Activated CD4-positive, alpha-beta T cell treated with anti-CD3 and anti-CD28 coated beads for 36 hours (primary cell): ENCODE measurements at regions of chr12 and their contacts with region 1.

Region 1: DNA sequence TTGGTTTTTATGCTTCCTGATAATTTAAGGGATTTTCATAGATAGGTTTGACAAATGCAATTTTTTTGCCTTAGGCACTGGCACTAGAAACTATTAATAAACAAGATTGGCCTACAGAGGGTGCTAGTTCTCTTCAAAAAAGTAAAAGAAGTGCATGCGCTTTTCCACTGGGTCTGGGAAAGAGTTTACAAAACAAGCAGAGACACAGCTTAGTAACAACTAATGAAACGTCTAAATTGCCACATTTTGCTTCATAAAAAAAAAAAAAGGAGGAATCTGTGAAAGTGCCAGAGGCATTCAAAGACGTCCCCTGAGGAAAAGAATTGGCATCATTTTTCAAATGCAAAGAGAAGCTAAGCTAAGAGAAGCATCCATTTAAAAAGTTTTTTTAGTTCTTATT is 58.3 kb upstream of the EEA1 start:
- DNase-seq: no peak
- ATAC-seq: no peak
- H3K4me3 Mint-ChIP-seq: peak overlapping the region; percentile 22
- H3K27ac Mint-ChIP-seq: peak overlapping the region; percentile 88
- H3K4me1 Mint-ChIP-seq: peaks cover 37% of the 10 kb centered on the region
- H3K27me3 Mint-ChIP-seq: no peaks in the 10 kb centered on the region

Region 2: DNA sequence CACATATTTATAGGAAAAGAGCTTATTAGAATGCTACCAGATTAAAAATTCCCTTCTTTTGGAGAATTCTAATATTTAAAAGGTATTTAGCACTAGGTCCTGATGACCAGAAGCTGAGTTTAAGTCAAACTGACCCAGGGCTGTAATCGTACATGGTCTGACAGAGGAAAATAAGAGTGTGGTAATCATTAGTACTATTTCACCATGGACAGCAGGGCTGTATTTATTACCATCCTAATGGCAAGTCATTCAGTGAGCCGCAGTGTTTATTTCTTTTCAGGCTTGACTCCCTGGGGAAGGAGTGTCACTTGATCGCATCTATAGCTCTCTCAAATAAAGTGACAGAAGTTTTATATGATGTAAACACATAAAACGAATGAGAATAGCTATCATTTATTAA is 1103.6 kb before region 1 on chr12:
- CTCF ChIA-PET with region 1: no interaction called
- POLR2A ChIA-PET with region 1: no interaction called
- intact Hi-C with region 1: no loop called
- DNase-seq: no peak
- ATAC-seq: no peak
- H3K4me3 Mint-ChIP-seq: no peak overlapping the region
- H3K27ac Mint-ChIP-seq: no peak overlapping the region
- H3K4me1 Mint-ChIP-seq: peaks cover 23% of the 10 kb centered on the region
- H3K27me3 Mint-ChIP-seq: no peaks in the 10 kb centered on the region

Region 3: GRCh38 chr12:92784795-92785562 is 202.4 kb before region 1 on chr12:
- CTCF ChIA-PET with region 1: interaction called, 5 read pairs
- POLR2A ChIA-PET with region 1: no interaction called
- intact Hi-C with region 1: loop called (anchors 1 to 5 kb)
- DNase-seq: peak; percentile 33
- ATAC-seq: peak; percentile 98
- H3K4me3 Mint-ChIP-seq: no peak overlapping the region
- H3K27ac Mint-ChIP-seq: no peak overlapping the region
- H3K4me1 Mint-ChIP-seq: peaks cover 2% of the 10 kb centered on the region
- H3K27me3 Mint-ChIP-seq: no peaks in the 10 kb centered on the region

Region 4: DNA sequence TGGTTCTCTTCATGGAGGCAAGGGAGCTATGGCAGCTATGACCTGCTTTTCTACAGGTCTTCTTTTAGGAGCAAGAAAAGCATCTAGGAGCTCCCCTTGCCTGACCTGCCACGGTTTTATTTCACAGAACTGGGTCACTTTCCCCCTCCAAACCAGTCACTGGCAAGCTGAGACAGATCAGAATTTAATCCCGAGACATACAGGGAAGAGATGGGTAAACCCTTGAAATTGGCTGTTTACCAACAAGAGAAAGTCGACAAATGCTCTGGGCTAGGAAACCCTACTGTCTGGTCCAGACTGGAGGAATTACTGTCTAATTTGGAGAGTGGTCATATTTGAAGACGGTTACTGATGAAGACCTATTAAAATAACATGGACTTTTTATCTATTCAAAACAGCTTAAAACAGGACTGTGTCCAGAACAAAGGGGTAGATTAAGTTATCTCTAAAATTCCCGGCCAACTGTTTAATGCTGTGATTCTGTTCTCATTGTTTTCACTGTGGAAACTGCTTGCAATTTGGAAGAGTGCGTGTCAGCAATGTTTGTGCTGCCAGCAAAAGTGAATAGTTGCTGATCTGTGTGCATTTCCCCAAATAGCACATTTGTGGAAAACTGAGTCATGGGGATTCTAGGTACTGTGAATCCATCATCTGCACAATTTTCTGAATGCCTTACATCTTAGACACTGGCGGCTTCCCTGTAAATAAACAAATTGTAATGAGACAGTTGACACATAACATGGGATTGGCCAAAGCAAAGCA is 15.1 kb after region 1 on chr12:
- CTCF ChIA-PET with region 1: interaction called, 21 read pairs
- POLR2A ChIA-PET with region 1: interaction called, 3 read pairs
- intact Hi-C with region 1: no loop called
- DNase-seq: no peak
- ATAC-seq: no peak
- H3K4me3 Mint-ChIP-seq: no peak overlapping the region
- H3K27ac Mint-ChIP-seq: no peak overlapping the region
- H3K4me1 Mint-ChIP-seq: no peaks in the 10 kb centered on the region
- H3K27me3 Mint-ChIP-seq: no peaks in the 10 kb centered on the region

Region 5: GRCh38 chr12:93109551-93110203 is 122.3 kb after region 1 on chr12:
- CTCF ChIA-PET with region 1: interaction called, 3 read pairs
- POLR2A ChIA-PET with region 1: interaction called, 6 read pairs
- intact Hi-C with region 1: loop called in 1 of 2 experiments (anchors 2 kb)
- DNase-seq: peak; percentile 75
- ATAC-seq: peak; percentile 93
- H3K4me3 Mint-ChIP-seq: no peak overlapping the region
- H3K27ac Mint-ChIP-seq: peak overlapping the region; percentile 89
- H3K4me1 Mint-ChIP-seq: peaks cover 26% of the 10 kb centered on the region
- H3K27me3 Mint-ChIP-seq: no peaks in the 10 kb centered on the region

Region 6: DNA sequence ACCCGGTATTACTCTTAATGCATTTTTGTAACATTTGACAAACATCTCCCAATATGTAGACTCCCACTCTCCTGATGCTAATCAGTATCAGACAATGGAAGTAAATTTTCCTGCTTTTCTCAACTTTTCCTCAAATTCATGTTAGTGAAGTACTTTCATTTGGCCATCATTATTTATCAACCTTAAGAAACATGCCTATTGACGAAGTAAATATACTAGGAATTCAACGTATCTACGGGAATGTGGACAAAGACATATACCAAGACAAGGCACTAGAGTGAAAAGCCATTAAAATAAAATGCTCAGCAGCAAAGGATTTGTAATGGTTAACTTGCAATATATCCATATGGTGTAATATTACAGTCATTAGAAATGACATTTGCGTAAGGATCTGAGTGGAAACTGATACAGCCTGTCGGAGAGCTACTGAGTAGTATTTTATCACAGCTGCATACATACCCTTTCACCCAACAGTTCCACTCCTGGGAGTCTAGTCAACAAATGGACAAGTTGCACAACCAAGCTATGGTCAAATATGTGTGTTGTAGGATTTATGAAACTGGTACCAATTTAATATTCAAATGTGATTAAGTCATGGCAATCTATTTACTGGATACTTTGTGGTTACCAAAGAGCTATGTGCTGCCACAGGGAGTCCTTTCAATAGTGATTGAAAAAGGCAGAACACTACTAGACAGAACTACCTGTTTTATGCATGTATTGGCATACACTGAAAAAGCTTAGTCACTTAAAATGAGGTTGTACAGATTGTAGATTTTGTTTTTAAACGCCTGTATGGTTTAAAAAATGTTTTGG is 416.8 kb after region 1 on chr12:
- CTCF ChIA-PET with region 1: interaction called, 10 read pairs
- POLR2A ChIA-PET with region 1: interaction called, 6 read pairs
- intact Hi-C with region 1: no loop called
- DNase-seq: no peak
- ATAC-seq: no peak
- H3K4me3 Mint-ChIP-seq: no peak overlapping the region
- H3K27ac Mint-ChIP-seq: peak overlapping the region; percentile 34
- H3K4me1 Mint-ChIP-seq: peaks cover 49% of the 10 kb centered on the region
- H3K27me3 Mint-ChIP-seq: no peaks in the 10 kb centered on the region

Region 7: DNA sequence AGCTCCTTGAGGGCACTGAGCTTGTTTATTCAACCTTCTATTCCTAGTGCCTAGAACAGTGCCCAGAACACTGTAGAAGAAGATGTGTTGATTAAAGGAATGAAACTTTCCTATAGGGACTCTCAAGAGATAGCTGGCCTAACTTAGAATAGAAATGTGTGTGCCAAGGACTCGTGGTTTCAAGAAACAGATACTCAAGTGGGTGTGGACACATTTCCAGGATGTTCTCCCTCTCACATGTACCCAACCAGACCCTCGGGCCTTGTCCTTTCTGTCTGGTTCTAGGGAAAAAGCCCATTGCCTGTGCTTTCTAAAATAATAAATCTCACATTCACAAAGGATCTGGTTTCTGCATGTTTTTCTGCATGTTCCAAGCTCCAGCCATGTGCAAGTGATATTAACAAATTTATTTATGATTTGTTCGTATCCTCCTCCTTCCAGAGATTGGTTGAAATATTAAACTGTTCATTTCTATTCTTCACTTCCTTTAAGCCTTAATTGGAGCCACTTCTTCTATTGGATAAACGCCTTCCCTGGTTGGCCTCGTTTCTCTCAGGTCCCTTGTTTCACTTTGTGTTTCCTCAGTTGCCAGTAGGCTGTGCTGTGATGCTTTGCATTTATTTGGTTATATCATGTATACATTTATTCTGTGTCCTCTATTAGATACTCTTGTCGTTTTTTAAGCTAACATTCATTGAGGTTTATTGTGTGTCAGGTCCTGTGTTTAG is 779.6 kb after region 1 on chr12:
- CTCF ChIA-PET with region 1: no interaction called
- POLR2A ChIA-PET with region 1: no interaction called
- intact Hi-C with region 1: loop called in 1 of 2 experiments (anchors 10 kb)
- DNase-seq: peak; percentile 54
- ATAC-seq: peak; percentile 75
- H3K4me3 Mint-ChIP-seq: no peak overlapping the region
- H3K27ac Mint-ChIP-seq: no peak overlapping the region
- H3K4me1 Mint-ChIP-seq: peaks cover 22% of the 10 kb centered on the region
- H3K27me3 Mint-ChIP-seq: no peaks in the 10 kb centered on the region